GM13976 (cell line): ENCODE measurements at regions of chr15 and their contacts with region 1.

Region 1: GRCh38 chr15:39125904-39126303 is 455.0 kb upstream of the THBS1 start:
- DNase-seq: peak; percentile 61
- CTCF ChIP-seq: peak; percentile 68

Region 2: DNA sequence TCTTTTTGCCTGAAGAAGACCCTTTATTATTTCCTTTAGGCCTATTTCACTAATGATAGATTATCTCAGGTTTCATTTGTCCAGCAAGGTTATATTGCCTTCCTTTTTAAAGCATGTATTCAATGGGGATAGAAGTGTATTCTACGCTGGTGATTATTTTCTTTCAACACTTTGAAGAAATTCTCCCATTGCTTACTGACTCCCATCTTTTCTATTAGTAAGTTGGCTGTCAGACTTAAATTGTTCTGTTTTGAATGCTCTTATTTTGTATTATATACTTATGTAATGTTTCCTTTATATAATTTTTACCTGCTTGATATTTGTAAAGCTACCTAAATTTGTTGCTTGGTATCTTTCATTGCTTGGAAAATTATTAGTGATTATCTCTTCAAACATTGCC is 116.2 kb before region 1 on chr15:
- in situ Hi-C with region 1: no loop called
- DNase-seq: no peak
- CTCF ChIP-seq: no peak

Region 3: GRCh38 chr15:39580117-39580484 is 454.2 kb after region 1 on chr15:
- in situ Hi-C with region 1: loop called (anchors 10 kb)
- DNase-seq: peak; percentile 91
- CTCF ChIP-seq: peak; percentile 97